Breast epithelium (tissue), 4 donors: ENCODE measurements at regions of chr6 and their contacts with region 1.

Region 1: GRCh38 chr6:43306086-43306485 is 2.5 kb downstream of the CRIP3 start:
- DNase-seq: no peak
- H3K4me3 ChIP-seq: no peak overlapping the region
- H3K27ac ChIP-seq: no peak overlapping the region
- H3K4me1 ChIP-seq: no peaks in the 10 kb centered on the region
- H3K27me3 ChIP-seq: no peaks in the 10 kb centered on the region
- CTCF ChIP-seq: no peak
- POLR2A ChIP-seq: no peak

Region 2: GRCh38 chr6:43070028-43070632 is 236.0 kb before region 1 on chr6:
- intact Hi-C with region 1: no loop called
- DNase-seq: no peak
- H3K4me3 ChIP-seq: no peak overlapping the region
- H3K27ac ChIP-seq: no peak overlapping the region
- H3K4me1 ChIP-seq: no peaks in the 10 kb centered on the region
- H3K27me3 ChIP-seq: no peaks in the 10 kb centered on the region
- CTCF ChIP-seq: peak; percentile 22 to 40 (median 33)
- POLR2A ChIP-seq: no peak

Region 3: DNA sequence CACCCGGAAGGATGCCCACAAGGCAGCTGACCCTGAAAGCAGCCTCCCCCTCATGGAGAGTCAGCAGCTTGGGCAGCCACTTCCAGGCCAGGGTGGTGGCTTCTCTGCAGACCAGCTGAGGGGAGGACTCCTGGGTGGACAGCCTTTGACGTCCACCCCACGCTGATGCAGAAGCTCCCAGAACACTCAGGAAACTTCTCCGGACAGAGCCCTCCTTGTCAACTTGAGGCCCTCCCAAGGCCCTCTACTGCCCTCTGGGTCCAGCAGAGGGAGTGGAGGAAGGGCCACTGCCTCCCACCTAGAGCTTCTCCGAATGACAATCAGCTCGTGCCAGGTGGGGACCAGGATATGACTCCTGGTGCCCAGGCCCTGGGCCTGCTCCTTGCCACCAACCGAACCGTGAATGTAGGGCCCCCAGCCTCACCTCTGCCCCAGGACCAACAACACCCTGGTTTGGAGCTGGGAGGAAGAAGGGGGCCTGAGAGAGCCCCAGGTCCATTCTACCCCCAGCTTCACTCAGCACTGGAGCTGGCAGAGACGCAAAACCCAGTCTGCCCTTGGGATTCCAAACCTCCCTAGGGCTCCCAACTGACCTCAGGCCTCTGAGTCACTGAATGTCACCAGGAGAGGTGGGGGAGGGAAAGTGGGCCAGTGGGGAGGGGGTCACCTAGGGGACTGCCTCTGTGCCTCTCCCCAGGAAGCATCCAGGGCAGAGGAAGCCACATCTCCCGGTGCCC is 18.9 kb before region 1 on chr6:
- intact Hi-C with region 1: no loop called
- DNase-seq: no peak
- H3K4me3 ChIP-seq: no peak overlapping the region
- H3K27ac ChIP-seq: no peak overlapping the region
- H3K4me1 ChIP-seq: no peaks in the 10 kb centered on the region
- H3K27me3 ChIP-seq: peaks cover 0 to 37% of the 10 kb centered on the region in 2 donors
- CTCF ChIP-seq: no peak
- POLR2A ChIP-seq: no peak

Region 4: GRCh38 chr6:43339168-43339567 is 33.1 kb after region 1 on chr6:
- intact Hi-C with region 1: no loop called
- DNase-seq: no peak
- H3K4me3 ChIP-seq: no peak overlapping the region
- H3K27ac ChIP-seq: no peak overlapping the region
- H3K4me1 ChIP-seq: no peaks in the 10 kb centered on the region
- H3K27me3 ChIP-seq: no peaks in the 10 kb centered on the region
- CTCF ChIP-seq: no peak
- POLR2A ChIP-seq: no peak

Region 5: DNA sequence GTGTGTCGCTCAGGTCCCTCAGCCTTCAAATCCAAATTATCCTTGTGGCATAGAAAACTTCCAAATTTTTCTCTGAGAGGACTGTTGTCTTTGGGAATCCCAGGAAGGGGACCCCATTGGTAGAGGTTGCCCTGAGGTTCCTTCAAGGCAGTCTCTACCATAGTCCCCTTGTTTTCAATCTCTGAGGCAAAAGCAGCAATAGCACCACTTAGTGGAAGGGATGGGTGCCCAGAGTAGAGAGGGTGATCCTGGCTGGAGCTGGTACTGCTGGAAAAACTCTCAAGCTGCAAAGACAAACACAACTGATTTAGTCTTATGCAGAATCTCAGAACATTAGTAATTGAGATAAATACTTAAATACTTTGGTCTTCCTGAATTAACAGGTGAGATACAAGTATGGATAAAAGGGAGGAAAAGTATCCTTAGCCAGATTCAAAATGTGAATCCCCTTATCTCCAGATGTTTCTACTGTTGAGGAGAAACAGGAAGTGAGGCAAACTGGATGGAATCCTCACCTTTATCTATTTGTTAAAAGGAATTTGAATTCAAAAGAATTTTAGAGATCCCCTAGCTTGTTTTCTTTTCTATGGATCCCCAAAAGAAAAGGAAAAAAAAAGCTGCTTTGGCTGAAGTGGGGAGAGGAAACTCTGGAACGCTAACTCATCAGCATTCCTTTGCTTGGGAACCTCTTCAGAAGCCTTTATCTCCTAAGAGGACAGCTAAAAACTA is 49.9 kb after region 1 on chr6:
- intact Hi-C with region 1: loop called (anchors 1 kb)
- DNase-seq: no peak
- H3K4me3 ChIP-seq: no peak overlapping the region
- H3K27ac ChIP-seq: no peak overlapping the region
- H3K4me1 ChIP-seq: no peaks in the 10 kb centered on the region
- H3K27me3 ChIP-seq: no peaks in the 10 kb centered on the region
- CTCF ChIP-seq: no peak
- POLR2A ChIP-seq: no peak

Region 6: DNA sequence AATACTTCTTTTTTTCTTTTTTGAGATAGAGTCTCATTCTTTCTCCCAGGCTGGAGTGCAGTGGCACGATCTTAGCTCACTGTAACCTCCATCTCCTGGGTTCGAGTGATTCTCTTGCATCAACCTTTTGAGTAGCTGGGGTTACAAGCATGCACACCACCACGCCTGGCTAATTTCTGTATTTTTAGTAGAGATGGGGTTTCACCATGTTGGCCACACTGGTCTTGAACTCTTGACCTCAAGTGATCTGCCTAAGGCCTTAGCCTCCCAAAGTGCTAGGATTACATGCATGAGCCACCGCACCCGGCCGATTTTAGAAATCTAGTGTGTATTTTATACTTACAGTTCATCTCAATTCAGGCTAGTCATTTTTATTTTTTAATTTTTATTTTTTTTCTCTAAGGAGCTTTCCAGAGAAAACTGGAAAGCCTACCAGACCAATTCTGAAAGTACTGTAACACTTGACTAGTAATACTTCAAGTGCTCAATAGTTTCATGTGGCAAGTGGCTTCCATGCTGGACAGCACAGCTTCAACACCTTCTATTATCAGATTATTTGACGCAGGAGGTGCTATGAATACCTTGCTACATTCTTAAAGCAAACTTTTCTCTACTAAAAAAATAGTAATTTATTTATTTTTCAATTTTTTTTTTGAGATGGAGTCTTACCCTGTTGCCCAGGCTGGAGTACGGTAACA is 235.8 kb after region 1 on chr6:
- intact Hi-C with region 1: no loop called
- DNase-seq: no peak
- H3K4me3 ChIP-seq: no peak overlapping the region
- H3K27ac ChIP-seq: no peak overlapping the region
- H3K4me1 ChIP-seq: no peaks in the 10 kb centered on the region
- H3K27me3 ChIP-seq: no peaks in the 10 kb centered on the region
- CTCF ChIP-seq: no peak
- POLR2A ChIP-seq: no peak